Heart left ventricle (tissue), 16 donors: ENCODE measurements at regions of chr14 and their contacts with region 1.

Region 1: GRCh38 chr14:74954232-74954946 is 1.0 kb downstream of the PGF start:
- DNase-seq: peak in 2 of 5 donors; percentile 45 to 54
- ATAC-seq: peak in 2 of 4 donors; percentile 10 to 17
- H3K4me3 ChIP-seq: peak overlapping the region; percentile 51 to 89 (median 70)
- H3K27ac ChIP-seq: peak overlapping the region in 11 of 12 donors; percentile 24 to 87 (median 74)
- H3K4me1 ChIP-seq: peaks cover 0 to 65% (median 34%) of the 10 kb centered on the region in 12 donors
- H3K27me3 ChIP-seq: peaks cover 0 to 9% (median 0%) of the 10 kb centered on the region in 9 donors
- CTCF ChIP-seq: no peak
- POLR2A ChIP-seq: no peak

Region 2: DNA sequence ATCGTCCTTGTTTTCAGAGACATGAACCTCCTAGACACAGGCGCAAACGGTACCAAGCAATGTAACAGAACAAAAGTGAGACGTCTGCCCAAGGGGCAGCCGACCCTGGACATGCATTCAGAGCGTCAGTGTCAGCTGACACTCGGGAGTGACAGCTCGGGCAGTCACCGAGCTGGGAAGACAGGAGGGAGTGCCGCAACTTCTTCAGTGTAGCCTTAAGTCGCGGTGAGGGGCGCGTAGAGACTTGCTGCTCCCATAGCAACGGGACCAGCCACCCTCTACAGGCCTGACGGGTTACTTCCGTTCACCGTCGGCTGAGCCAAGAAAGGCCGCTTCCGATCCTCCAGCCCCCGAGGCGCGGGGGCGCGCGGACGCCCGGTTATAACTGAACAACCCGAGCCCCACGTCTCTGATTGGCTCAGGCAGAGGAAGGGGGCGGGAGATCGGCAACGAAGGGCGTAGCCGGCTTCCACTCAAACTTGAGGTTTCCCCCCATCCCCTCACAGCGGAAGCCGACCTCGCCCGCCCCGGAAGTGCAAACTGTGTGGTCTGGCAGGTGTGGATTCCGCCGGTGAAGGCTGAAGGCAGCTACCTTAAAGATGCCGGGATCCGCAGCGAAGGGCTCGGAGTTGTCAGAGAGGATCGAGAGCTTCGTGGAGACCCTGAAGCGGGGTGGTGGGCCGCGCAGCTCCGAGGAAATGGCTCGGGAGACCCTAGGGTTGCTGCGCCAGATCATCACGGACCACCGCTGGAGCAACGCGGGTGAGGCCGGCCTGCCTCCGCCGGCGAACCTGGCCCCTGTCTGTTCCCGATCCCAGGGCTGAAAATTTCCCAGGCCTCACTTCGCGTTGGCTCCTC is 48.2 kb after region 1 on chr14 and contains the start of gene EIF2B2:
- intact Hi-C with region 1: loop called in 6 of 10 experiments (anchors 5 to 10 kb)
- DNase-seq: peak; percentile 98 to 99 (median 98)
- ATAC-seq: peak; percentile 100
- H3K4me3 ChIP-seq: peak within 1 kb of the TSS; percentile 61 to 99 (median 86)
- H3K27ac ChIP-seq: peak within 1 kb of the TSS; percentile 81 to 94 (median 89)
- H3K4me1 ChIP-seq: peaks cover 6 to 27% (median 14%) of the 10 kb centered on the region in 12 donors
- H3K27me3 ChIP-seq: no peaks in the 10 kb centered on the region
- CTCF ChIP-seq: peak in 5 of 12 donors; percentile 13 to 41 (median 14)
- POLR2A ChIP-seq: peak in 1 of 2 donors; percentile 71
- total RNA-seq, gene EIF2B2: 26.2 to 40.9 (median 30.3) TPM

Region 3: DNA sequence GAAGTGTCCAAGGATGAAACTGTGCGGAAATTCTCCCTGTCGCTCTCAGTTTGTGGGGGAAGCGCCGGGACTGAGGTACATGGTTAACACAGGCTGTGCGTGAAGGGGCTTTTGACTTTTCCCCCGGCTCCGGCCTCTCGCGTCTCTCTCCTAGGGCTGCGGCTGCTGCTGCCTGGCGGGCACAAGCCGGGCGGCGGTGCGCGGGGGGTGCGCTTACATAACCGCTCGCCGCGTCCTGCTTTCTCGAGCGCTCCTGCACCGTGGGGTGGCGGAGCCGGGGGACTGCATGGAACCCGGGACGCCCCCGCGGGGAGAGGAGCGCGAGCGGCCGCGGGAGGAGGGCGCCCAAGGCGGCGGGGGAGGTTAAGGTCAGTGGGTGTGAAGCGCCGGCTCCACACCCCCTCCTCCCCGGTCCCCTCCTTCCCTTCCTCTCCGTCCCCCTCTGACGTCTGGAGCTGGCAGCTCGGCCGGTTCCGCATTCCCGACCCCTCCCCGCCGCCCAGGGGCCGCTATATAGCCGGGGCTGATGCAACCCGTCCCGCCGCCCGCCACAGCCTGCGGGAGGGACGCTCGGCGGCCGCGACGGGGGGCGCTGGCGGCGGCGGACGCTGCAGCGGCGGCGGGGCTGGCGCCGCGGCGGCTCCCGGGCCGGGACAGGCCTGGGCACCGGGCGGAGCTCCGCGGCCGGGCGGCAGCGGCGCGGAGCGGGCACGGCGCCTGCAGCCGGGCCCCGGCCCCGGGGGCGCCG is 473.3 kb after region 1 on chr14 and contains the start of gene JDP2:
- intact Hi-C with region 1: no loop called
- DNase-seq: peak; percentile 96 to 98 (median 97)
- ATAC-seq: peak; percentile 88 to 96 (median 93)
- H3K4me3 ChIP-seq: peak within 1 kb of the TSS; percentile 47 to 96 (median 79)
- H3K27ac ChIP-seq: peak within 1 kb of the TSS; percentile 75 to 98 (median 95)
- H3K4me1 ChIP-seq: peaks cover 4 to 57% (median 50%) of the 10 kb centered on the region in 12 donors
- H3K27me3 ChIP-seq: no peaks in the 10 kb centered on the region
- CTCF ChIP-seq: peak in 9 of 12 donors; percentile 8 to 48 (median 23)
- POLR2A ChIP-seq: peak; percentile 21 to 83
- total RNA-seq, gene JDP2: 12.2 to 72.6 (median 28.1) TPM

Region 4: DNA sequence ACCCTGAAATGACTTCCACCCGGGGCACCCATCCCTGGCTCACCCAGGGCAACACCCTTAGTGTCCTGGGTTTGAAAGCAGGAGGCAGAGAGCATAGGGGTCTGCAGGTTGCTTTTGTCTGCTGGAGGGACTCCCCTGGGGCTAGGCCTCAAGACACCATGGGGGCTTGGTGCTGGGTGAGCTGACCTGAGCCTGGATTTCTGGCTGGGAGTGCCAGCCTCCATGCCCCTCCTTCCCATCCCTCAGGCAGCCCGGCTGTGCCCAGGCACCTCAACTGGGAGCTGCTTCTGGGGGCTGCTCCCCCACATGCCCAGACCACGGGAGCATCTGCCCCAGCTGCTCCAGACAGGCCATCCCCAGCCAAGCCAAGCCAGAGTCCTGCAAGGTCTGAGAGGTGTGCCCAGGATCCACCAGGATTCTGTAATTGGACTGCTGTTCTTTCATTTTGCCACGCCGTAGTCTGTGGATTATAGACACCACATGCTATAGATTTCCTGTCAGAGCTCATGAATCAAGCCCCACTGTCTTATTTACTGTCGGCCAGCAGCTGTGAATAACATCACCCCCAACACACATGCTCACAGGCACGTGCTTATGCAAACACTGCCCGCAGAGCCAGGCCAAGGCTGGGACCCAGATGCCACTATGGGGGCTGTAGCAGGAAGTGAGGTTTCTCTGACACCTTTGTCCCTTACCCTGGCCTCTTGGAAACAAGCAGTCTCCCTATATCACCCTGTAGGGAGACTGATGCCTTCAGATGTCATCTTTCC is 1392.2 kb after region 1 on chr14:
- intact Hi-C with region 1: no loop called
- DNase-seq: no peak
- ATAC-seq: no peak
- H3K4me3 ChIP-seq: no peak overlapping the region
- H3K27ac ChIP-seq: no peak overlapping the region
- H3K4me1 ChIP-seq: peaks cover 0 to 19% (median 6%) of the 10 kb centered on the region in 12 donors
- H3K27me3 ChIP-seq: no peaks in the 10 kb centered on the region
- CTCF ChIP-seq: no peak
- POLR2A ChIP-seq: no peak